ENCODE measurements at regions of chr12 and their contacts with region 1.

Region 1: GRCh38 chr12:56041552-56042429 is at the start of gene RPS26:
- DNase-seq: peak; percentile 94
- H3K4me3 Mint-ChIP-seq: peak within 1 kb of the TSS; percentile 95
- H3K27ac Mint-ChIP-seq: peak within 1 kb of the TSS; percentile 93
- H3K4me1 Mint-ChIP-seq: peaks cover 44% of the 10 kb centered on the region
- H3K27me3 Mint-ChIP-seq: no peaks in the 10 kb centered on the region
- total RNA-seq, gene RPS26: 43.9 and 45.2 TPM in 2 replicates

Region 2: DNA sequence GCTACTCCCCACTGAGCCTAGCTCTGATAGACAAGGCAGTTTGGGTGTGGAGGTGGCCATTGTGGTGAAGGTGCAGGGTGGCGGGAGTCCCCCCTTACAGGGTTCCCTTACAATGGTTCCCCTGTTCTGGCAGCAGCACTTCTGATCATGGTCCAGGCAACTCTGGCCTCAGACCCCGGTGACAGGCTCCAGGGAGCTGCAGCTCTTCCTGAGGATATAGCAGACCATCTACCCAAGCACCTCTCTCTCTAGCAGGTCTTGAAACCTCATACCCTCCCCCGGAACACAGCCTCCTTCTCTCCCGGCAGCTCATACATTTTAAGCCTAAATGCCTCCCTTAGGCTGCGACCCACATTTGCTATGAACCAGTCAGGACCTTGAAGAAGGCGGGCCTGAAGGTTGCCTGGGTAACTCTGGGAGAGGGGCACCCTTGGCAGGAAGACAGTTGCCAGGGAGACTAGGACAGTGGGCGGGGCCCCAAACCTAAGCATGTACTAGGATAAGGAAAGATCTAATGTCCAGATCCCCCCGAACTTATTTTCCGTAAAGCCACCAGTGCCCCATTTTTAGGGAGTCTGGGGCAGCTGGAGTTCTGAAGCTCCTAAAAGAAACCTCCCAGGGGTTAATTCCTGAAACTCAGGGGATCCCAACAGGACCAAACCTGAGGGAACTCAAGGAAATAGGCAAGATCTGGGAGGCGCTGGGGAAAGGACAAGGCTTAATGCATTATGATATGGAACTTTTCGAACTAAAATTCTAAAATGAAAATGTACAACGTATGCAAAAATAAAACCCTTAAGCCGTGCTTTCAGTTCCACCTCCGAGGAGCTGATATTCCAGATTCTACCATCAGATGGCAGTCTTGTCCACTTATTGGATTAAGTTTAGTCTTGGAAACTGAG is 303.4 kb before region 1 on chr12:
- intact Hi-C with region 1: loop called (anchors 5 kb)
- DNase-seq: peak; percentile 69
- H3K4me3 Mint-ChIP-seq: peak overlapping the region; percentile 78
- H3K27ac Mint-ChIP-seq: peak overlapping the region; percentile 74
- H3K4me1 Mint-ChIP-seq: peaks cover 29% of the 10 kb centered on the region
- H3K27me3 Mint-ChIP-seq: no peaks in the 10 kb centered on the region

Region 3: GRCh38 chr12:55926738-55927587 is 114.8 kb before region 1 on chr12:
- intact Hi-C with region 1: loop called (anchors 1 kb)
- DNase-seq: peak; percentile 88
- H3K4me3 Mint-ChIP-seq: peak overlapping the region; percentile 99
- H3K27ac Mint-ChIP-seq: peak overlapping the region; percentile 91
- H3K4me1 Mint-ChIP-seq: peaks cover 53% of the 10 kb centered on the region
- H3K27me3 Mint-ChIP-seq: no peaks in the 10 kb centered on the region

Region 4: GRCh38 chr12:55996715-55997534 is 44.9 kb before region 1 on chr12 and contains the start of gene SUOX:
- intact Hi-C with region 1: loop called (anchors 1 kb)
- DNase-seq: peak; percentile 54
- H3K4me3 Mint-ChIP-seq: peak within 1 kb of the TSS; percentile 84
- H3K27ac Mint-ChIP-seq: peak within 1 kb of the TSS; percentile 46
- H3K4me1 Mint-ChIP-seq: peaks cover 24% of the 10 kb centered on the region
- H3K27me3 Mint-ChIP-seq: no peaks in the 10 kb centered on the region
- total RNA-seq, gene SUOX: 19.9 and 21.2 TPM in 2 replicates

Region 5: GRCh38 chr12:56029666-56030293 is 12.0 kb before region 1 on chr12:
- intact Hi-C with region 1: loop called (anchors 1 kb)
- DNase-seq: peak; percentile 27
- H3K4me3 Mint-ChIP-seq: no peak overlapping the region
- H3K27ac Mint-ChIP-seq: peak overlapping the region; percentile 29
- H3K4me1 Mint-ChIP-seq: peaks cover 41% of the 10 kb centered on the region
- H3K27me3 Mint-ChIP-seq: no peaks in the 10 kb centered on the region

Region 6: DNA sequence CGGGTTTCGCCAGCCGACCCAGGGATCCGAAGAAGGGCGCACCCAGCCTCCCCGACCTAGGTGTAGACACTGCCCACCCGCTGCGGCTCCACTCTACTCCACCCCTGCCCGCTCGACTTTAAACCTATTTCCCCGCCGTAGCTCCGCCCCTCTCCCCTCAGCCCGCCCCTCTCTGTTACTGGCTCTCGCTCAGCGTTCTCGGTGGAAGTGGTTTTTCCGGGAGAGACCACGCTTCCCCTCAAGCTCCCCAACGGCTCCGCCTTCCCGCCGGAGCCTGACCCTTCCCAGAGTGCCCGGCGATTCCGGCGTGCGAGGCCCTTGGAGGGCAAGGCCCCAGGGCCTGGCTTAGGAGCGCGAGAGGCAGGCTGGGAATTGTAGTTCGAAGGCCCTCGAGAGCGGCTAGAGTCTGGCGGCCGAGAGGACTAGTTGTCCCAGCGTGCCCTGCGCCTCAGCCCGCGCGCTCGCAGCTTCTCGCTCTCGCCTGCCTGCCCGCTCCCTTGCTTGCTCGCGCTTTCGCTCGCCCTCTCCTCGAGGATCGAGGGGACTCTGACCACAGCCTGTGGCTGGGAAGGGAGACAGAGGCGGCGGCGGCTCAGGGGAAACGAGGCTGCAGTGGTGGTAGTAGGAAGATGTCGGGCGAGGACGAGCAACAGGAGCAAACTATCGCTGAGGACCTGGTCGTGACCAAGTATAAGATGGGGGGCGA is 62.5 kb after region 1 on chr12 and contains the start of gene PA2G4:
- intact Hi-C with region 1: loop called (anchors 1 kb)
- DNase-seq: peak; percentile 99
- H3K4me3 Mint-ChIP-seq: peak within 1 kb of the TSS; percentile 92
- H3K27ac Mint-ChIP-seq: peak within 1 kb of the TSS; percentile 95
- H3K4me1 Mint-ChIP-seq: peaks cover 51% of the 10 kb centered on the region
- H3K27me3 Mint-ChIP-seq: no peaks in the 10 kb centered on the region
- total RNA-seq, gene PA2G4: 356 and 364 TPM in 2 replicates

Region 7: GRCh38 chr12:57611108-57611809 is 1569.5 kb after region 1 on chr12 and contains the start of gene ARHGEF25:
- intact Hi-C with region 1: no loop called
- DNase-seq: no peak
- H3K4me3 Mint-ChIP-seq: peak within 1 kb of the TSS; percentile 73
- H3K27ac Mint-ChIP-seq: no peak within 1 kb of the TSS
- H3K4me1 Mint-ChIP-seq: peaks cover 3% of the 10 kb centered on the region
- H3K27me3 Mint-ChIP-seq: peaks cover 34% of the 10 kb centered on the region
- total RNA-seq, gene ARHGEF25: 1.9 and 2.3 TPM in 2 replicates